ENCODE measurements at regions of chr3 and their contacts with region 1.

Region 1: DNA sequence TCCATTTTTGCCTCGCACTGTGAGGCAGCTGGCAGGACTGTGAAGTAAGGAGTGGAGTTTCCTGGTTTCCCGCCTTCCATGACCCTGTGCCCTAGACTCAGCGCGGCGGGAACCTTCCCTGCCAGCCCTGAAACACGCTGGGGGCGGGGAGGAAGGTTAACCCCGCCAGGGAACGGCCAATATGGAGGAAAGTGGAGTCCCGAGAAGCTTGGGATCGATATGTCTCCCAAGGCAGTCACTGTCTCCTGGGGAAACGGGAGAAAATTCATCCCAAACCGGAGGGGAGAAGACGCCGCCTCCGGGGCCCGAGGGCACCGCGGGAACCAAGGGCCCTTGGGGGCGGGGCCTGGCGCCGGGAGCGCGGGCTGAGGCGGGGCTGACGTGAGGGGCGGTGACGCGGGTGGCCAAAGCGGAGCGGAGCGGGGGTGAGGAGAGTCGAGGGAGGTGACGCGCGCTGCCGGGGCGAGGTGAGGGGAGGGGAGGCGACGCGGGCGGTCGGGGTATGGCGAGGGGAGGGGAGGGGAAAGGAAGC is at the start of gene HMCES:
- DNase-seq: peak; percentile 96
- ATAC-seq: peak; percentile 98
- total RNA-seq, gene HMCES: 42.3 TPM

Region 2: GRCh38 chr3:128907706-128908445 is 370.6 kb before region 1 on chr3:
- intact Hi-C with region 1: no loop called
- DNase-seq: no peak
- ATAC-seq: no peak

Region 3: GRCh38 chr3:129185783-129186182 is 92.7 kb before region 1 on chr3:
- intact Hi-C with region 1: no loop called
- DNase-seq: no peak
- ATAC-seq: no peak

Region 4: GRCh38 chr3:129316131-129317013 is 37.9 kb after region 1 on chr3:
- intact Hi-C with region 1: loop called (anchors 2 kb)
- DNase-seq: peak; percentile 92
- ATAC-seq: peak; percentile 58

Measured in Right ventricle myocardium inferior (tissue), 1 donor.